PC-9 (cell line): ENCODE measurements at regions of chr11 and their contacts with region 1.

Region 1: GRCh38 chr11:123707606-123708205 is 33.8 kb downstream of the ZNF202 start:
- DNase-seq: peak in 1 of 2 experiments; percentile 54
- H3K4me3 ChIP-seq: no peak overlapping the region
- H3K27ac ChIP-seq: no peak overlapping the region
- H3K4me1 ChIP-seq: no peaks in the 10 kb centered on the region
- H3K27me3 ChIP-seq: peaks cover 18% of the 10 kb centered on the region; the same call in 1 of the 2 replicates
- CTCF ChIP-seq: peak; percentile 79

Region 2: DNA sequence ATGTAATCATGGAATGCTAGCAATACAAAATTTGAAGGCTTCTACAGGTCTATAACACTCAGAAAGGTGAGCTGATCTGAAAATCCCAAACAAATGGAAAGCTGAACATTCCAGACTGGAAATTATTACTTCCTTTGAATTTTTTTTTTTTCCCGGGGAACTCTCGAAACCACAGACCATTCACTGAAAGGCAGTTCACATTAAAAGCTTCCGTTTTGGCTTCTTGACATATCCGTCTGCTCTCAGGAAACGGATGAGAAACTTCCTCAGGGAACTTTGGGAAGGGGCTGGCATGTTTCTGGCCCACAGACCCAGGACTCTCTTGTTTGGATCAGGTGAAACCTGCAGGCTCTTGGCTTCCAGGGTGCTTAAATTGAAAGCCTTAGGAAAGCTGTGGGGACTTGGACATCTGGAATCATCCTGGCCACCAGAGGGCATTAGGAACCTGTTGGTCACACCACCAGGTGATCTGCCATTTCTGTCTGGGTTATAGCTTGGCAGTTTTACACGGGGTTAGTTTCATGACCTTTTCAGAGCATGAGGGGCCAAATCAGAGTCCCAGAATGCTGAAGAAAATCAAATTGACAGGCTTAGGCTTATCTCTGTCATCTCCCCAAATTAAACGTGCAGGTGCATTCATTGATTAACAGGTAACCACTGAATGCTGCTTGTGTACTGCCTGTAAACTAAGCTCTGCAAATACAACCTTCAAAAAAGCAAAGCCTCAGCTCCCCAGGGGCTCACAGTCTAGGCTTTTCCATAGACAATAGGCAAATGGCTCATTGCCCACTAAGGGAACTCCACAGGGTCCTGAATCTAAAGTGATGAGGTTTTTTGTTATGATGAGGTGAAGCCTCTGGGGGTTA is 300.3 kb before region 1 on chr11:
- CTCF ChIA-PET with region 1: no interaction called
- POLR2A ChIA-PET with region 1: no interaction called
- intact Hi-C with region 1: loop called (anchors 10 kb)
- DNase-seq: peak; percentile 55 to 60
- H3K4me3 ChIP-seq: no peak overlapping the region
- H3K27ac ChIP-seq: no peak overlapping the region
- H3K4me1 ChIP-seq: no peaks in the 10 kb centered on the region
- H3K27me3 ChIP-seq: no peaks in the 10 kb centered on the region
- CTCF ChIP-seq: peak; percentile 88

Region 3: DNA sequence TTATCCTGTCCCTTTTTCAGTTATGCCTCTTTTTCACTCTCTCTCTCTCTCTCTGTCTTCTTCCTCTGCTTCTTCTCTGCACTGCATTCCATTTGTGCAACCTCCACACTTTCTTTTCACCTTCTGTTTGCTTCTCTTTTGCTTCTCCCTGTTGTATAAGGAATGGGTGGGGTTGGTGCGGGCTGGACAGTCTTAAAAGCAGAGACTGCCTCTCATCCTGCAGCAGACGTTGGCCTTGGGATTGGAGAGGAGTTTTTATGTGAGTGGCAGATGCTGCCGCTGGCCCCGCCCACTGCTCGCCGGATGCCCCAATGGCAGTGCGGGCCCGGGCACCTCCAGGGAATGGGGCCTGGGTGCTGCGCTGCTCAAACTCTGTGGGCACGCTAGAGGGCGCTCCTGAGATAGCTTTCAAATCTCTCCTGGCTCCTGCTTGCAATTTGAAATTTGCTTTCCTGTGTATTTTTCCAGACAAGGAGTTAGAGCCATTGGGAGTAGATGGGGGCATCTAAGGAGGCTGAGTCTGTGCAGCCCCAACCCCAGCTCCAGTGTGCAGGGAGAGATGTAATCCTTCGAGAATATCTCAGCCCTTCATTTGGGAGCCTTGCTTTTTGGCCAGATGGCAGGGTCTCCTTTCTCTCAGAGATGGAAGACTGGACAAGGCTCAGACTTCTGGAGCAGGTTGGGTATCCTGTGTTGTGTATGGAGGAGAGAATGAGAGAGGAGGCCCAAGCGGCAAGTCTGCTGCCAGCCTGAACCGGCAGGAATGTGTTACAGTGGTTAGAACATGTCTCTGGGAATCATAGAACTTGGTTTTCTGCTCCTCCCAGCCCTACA is 196.5 kb before region 1 on chr11:
- CTCF ChIA-PET with region 1: no interaction called
- POLR2A ChIA-PET with region 1: no interaction called
- intact Hi-C with region 1: loop called (anchors 1 kb)
- DNase-seq: peak; percentile 68 to 84
- H3K4me3 ChIP-seq: no peak overlapping the region
- H3K27ac ChIP-seq: no peak overlapping the region
- H3K4me1 ChIP-seq: no peaks in the 10 kb centered on the region
- H3K27me3 ChIP-seq: no peaks in the 10 kb centered on the region
- CTCF ChIP-seq: peak; percentile 94

Region 4: DNA sequence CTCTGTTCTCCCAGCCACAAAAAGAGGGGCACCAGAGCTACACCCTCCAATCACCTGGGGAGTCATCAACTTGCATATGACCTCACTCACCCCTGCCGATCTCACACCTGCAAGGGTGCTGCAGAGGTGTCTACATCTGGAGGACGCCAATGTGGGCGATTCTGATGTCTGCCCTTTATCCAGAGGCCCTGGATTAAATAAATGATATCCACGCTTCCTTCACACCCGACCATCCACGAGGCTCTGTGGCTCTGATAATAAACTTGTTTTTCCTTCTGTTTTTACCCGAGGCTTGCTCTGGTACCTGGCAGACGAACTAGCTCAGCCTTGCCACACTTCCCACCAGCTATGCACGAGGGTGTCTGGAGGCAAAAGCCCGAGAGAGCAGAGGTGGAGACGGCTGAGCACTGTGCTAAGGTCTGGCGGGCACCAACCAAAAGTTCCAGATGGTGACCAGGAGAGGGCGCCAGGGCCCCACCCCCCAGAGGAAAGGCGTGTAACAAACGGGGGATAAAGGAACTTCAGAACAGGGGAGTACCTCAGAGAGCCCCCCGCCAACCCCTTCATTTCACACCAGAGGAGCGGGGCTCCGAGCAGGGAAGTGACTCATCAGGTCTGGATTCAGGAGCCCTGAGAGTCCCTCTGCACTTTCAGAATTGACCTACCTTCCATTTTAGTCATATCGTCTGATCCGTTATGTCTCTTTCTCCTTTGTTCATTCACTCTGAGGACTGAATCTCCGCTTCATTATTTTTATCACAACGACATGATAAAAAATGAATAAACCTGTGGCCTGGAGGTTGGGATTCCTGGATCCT is 66.8 kb before region 1 on chr11:
- CTCF ChIA-PET with region 1: no interaction called
- POLR2A ChIA-PET with region 1: no interaction called
- intact Hi-C with region 1: loop called (anchors 5 kb)
- DNase-seq: peak in 1 of 2 experiments; percentile 19
- H3K4me3 ChIP-seq: no peak overlapping the region
- H3K27ac ChIP-seq: no peak overlapping the region
- H3K4me1 ChIP-seq: no peaks in the 10 kb centered on the region
- H3K27me3 ChIP-seq: peaks cover 75% of the 10 kb centered on the region
- CTCF ChIP-seq: peak; percentile 89

Region 5: DNA sequence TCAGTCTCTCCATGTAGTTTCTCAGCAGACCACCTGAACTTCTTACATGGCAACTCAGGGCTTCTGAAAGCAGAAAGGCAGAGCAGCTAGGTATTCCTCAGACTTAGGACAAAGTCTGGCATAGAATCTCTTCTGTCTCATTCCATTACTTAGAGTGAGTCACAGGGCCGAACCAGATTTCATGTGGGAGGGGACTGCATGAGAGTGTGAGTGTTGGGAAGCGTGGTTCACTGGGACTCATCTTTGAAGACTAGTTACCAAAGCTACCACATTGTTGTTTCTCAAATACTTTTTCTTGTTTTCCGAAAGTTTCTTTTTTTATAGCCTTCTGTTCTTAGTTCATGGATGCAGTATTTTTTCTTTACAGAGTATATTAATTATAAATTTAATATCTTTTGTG is 17.2 kb before region 1 on chr11:
- CTCF ChIA-PET with region 1: no interaction called
- POLR2A ChIA-PET with region 1: no interaction called
- intact Hi-C with region 1: no loop called
- DNase-seq: no peak
- H3K4me3 ChIP-seq: no peak overlapping the region
- H3K27ac ChIP-seq: no peak overlapping the region
- H3K4me1 ChIP-seq: peaks cover 6% of the 10 kb centered on the region; the same call in 1 of the 2 replicates
- H3K27me3 ChIP-seq: peaks cover 83% of the 10 kb centered on the region
- CTCF ChIP-seq: no peak

Region 6: GRCh38 chr11:124440608-124441007 is 732.9 kb after region 1 on chr11:
- CTCF ChIA-PET with region 1: no interaction called
- POLR2A ChIA-PET with region 1: no interaction called
- intact Hi-C with region 1: no loop called
- DNase-seq: no peak
- H3K4me3 ChIP-seq: no peak overlapping the region
- H3K27ac ChIP-seq: no peak overlapping the region
- H3K4me1 ChIP-seq: no peaks in the 10 kb centered on the region
- H3K27me3 ChIP-seq: peaks cover 13% of the 10 kb centered on the region
- CTCF ChIP-seq: no peak